Calu3 (cell line): ENCODE measurements at regions of chr17 and their contacts with region 1.

Region 1: DNA sequence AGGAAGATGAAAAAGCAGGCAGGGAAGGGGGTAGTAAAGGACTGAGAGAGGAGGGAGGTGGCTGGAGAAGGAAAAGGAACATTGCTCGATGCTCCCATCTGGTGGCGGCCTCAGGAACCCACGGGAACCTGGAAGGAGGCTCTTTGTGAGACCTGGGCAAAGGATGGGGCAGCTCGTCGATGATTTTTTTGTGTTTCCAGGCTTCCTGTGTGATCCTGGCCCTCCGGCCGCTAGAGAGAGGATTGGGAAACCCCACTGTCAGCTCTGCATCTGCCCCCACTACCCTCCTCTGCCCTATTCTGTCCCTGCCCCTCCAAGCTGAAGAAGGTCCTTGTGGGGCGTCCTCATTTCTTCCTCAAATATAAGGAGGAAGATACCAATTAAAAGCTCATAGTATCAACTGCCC is 6.6 kb downstream of the WFIKKN2 start:
- DNase-seq: peak; percentile 91
- H3K4me3 Mint-ChIP-seq: no peak overlapping the region
- H3K27ac Mint-ChIP-seq: no peak overlapping the region
- H3K4me1 Mint-ChIP-seq: peaks cover 8% of the 10 kb centered on the region
- H3K27me3 Mint-ChIP-seq: peaks cover 6% of the 10 kb centered on the region
- CTCF ChIP-seq: peak; percentile 83

Region 2: DNA sequence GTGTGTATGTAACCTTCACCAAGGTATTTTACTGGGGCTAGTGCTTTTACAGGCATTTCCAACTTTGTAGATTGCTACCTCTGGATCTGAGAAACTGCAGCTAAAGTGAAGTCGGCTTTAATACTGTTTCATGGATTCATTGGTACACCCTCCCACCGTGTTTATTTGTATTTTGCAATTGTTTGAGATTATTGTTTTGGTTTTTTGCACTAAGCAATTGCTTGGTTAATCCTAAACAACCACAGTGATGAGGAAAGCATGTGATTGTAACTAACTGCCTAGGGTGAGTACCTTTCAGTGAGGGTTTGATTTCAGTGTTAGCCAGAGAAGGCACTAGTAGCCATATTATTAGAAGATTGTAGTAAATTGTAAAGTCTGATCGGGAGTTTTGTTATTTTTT is 119.2 kb before region 1 on chr17:
- CTCF ChIA-PET with region 1: interaction called, 11 read pairs
- intact Hi-C with region 1: no loop called
- DNase-seq: no peak
- H3K4me3 Mint-ChIP-seq: peak overlapping the region; percentile 94
- H3K27ac Mint-ChIP-seq: peak overlapping the region; percentile 20
- H3K4me1 Mint-ChIP-seq: peaks cover 45% of the 10 kb centered on the region
- H3K27me3 Mint-ChIP-seq: no peaks in the 10 kb centered on the region
- CTCF ChIP-seq: no peak